ENCODE measurements at regions of chr10 and their contacts with region 1.

Region 1: DNA sequence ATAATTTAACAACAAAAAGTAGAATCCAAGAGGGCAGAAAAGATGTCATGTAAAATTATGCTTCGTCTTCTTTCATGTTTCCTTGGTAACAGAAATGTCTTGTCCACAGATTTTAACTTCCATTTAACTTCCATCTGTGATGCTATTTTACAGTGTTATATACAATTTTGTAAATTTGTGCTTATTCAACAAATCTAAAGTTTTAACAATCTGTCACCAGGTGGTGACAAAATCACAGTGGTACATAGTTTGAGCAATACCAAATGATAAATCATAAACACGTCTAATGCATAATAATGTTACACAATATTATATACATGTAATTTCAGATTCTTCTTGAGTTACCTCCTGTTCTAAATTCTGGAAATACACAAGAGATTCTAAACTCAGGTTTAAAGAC is 784.4 kb upstream of the CELF2 start:
- DNase-seq: no peak
- ATAC-seq: no peak

Region 2: DNA sequence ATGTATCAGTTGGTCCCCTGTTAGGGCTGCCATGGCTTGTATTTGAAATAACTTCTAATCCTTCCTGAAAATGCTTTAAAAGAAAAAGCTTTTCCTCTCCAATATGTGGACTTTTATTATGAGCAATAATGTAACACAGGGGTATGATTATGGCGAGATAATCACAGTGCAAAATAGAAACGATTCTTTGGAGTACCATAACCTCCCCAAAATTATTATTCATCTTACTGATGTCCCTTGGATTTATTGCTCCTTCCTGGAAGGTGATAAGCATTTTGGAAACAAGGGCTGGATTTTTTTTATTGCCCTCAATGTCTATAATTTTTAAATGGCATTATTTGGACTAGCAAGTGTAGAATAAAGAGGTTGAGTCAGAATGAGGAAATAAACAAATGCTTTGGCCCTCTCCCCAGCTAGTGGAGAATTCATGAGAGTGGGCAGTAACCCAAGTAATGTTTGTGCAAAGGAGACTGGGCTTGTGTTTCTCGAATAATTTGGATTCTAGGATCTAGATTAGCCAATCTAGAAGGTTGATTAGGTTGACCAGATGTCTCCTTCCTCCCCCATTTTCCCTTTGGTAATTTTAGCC is 380.5 kb after region 1 on chr10:
- intact Hi-C with region 1: no loop called
- DNase-seq: no peak
- ATAC-seq: no peak

Region 3: GRCh38 chr10:10677479-10677878 is 444.2 kb after region 1 on chr10:
- intact Hi-C with region 1: loop called (anchors 2 kb)
- DNase-seq: peak; percentile 69
- ATAC-seq: peak; percentile 88

Measured in Right ventricle myocardium inferior (tissue), 1 donor.